ENCODE measurements at regions of chr3 and their contacts with region 1.

Region 1: DNA sequence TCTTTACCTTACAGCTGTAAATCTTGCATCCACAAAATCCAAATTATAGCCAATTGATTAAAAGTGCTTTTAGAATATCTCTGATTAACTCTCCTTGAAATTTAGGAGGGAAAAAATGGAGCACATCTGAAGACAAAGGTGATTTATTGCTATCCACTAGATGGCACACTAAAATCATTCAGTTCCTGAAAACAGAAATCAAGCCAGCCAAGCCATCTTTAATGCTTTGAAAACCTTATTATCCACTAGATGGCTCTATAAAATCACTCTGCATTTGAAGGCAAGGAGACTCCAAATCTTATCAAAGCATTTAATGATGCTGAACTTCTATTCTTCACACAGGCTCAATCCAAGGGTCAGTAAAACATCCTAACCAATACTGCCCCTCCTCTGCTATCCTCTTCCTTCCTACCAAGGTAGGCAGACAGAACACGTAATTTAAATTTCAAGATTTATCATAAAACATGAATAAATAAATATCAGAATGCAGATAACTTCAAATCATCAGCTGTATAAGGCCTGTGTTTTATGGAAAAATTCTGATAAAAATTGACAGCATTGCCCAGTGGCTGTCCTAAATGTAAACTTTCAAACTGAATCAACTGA is 48.4 kb downstream of the GOLIM4 start:
- DNase-seq: peak in 8 of 42 donors; percentile 15 to 70 (median 46)

Region 2: DNA sequence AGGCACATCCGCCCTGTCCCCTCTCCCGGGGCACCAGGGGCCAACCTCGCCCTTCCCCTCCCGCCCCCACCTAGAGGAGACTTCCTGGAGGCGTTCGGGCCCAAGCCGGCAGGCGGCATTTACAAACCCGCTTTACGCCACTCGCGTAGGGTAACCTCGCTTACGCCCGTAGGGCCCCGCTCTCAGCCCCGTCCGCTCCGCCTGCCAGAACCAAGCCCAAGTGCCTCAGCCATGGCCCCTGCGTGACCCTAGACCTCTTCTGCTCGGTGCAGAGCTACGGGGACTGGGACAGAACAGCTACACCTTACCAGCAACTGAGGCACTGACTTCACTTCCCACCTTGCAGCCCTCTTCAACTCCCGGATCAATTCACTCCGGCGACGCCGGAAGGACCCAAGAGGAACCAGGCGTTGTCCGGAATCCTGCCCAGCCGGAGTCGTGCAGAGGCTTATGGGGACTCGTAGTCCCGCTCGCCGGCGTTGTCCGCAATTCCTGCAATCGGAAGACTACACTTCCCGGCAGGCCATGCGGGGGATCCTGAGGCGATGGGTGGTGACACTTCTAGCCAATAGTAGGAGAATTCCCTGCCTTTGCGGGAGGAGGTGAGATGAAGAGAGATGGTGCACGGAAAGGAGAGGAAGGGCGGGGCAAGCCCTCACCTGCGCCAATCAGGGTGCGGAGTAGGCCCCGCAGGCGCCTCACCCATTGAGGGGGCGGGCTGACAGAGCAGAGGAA is 312.6 kb before region 1 on chr3 and contains the start of gene PDCD10:
- intact Hi-C with region 1: loop called (anchors 10 kb)
- DNase-seq: peak; percentile 95 to 100 (median 99)

Region 3: GRCh38 chr3:168165390-168166269 is 118.3 kb after region 1 on chr3:
- intact Hi-C with region 1: loop called (anchors 1 kb)
- DNase-seq: peak in 41 of 42 donors; percentile 9 to 90 (median 68)

Region 4: DNA sequence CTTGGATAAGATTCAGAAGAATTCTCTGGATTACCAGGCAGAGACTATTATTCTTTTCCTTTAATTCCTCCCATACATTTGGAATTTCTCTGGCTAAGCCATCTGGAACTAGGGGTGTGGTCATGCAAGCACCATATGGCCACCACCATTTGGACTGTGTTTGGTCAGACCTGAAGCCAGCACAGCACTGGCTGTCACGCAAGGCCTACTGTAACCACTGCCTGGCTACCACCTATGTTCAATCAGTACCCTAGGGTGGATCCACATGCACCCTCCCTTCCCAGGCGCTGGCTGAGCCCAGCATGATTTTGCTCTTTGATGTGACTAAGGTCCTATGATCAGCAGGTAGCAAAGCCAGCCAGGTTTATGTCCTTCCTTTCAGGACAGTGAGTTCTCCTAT is 336.3 kb after region 1 on chr3:
- intact Hi-C with region 1: no loop called
- DNase-seq: no peak